HEK293T (cell line): ENCODE measurements at regions of chr10 and their contacts with region 1.

Region 1: DNA sequence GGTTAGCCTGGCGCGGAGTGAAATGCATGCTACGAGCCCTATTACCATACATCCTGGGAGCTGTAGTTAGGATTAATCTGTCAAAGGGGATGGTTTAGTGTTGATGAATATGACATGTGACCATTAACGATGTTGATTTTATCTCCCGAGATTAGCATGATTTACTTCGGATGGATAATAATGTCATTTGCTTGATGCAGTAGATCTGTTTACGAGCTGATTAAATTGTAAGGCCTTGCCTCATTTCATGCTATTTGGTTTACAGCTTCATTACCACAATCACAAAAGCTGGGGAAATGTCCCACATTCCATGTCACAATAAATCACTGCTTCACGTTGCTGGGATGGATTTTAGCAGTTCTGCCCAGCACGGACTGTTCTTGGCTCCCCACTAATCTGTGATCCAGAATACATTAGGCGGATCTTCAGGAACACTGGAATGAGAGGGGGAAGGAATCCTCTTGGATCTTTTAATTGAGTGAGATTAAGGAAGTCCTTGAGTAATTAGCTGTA is 22.3 kb downstream of the ZNF503 start:
- DNase-seq: peak; percentile 68

Region 2: DNA sequence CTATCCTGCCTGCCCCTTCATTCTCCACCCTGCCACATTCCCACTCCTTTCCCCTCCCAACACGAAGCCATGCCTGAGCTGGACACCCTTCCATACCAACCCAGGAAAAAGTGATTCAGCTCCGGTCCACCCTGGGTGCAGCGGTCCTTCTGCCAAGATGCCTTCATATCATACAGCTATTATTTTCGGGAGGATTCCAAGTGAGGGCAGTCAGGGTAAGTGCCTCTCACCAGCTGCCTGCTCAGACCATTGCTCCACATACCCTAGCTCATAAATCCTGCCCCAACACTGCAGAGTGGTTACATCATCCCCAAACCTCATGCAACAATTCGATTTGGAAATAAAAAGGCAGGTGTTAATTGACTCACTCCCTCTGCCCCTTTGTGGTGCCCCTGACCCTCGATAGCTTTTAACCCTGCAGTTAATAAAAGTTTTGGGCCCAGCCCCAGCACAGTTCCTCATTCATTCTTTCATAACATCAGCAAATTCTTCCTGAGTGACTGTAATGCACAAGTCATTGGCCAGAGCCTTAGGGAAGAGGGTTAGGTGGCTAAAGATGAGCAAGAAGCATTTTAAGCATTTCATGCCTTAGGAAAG is 20.3 kb before region 1 on chr10:
- CTCF ChIA-PET with region 1: interaction called, 5 read pairs
- POLR2A ChIA-PET with region 1: interaction called, 33 read pairs
- DNase-seq: peak; percentile 50

Region 3: DNA sequence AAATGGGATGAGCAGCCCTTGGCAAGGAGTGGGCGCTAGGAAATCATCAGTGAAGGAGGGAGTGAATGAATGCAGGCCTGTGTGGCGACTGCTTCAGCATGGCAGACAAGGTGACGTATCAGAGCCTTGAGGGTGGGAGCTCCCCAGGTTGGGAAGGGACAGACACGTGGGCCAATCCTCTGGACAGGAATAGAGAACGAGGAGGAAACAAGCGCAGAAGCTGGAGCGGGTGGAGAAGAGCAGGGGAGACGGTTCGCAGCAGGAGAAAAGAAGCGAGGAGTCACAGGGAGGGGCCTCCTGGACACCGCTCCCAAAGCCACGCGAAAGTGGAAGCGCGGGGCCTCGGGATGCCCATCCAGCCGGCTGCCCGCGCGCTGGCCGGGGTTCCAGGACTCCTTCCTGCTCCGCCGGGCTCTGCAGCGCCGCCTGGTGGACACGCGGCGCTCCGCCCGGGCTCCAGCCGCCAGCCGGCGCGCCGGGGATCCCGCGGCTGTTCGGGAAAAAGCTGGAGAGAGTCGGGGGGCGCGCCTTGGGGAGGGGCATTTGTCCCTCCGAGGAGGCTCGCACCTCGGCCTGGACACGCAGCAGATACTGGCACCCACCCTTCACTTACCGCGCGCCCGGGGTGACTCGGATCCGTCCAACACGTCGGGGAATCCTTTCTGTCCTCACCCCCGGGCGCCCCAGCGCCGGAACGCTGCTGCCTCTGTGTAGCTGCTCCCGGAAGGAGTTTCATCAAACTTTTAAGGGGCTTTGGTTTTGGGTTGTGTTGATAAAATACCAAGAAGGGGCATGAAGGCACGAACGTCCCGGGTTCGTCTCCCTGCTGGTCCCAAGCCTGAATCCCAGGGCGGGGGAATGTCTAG is 16.0 kb after region 1 on chr10:
- CTCF ChIA-PET with region 1: interaction called, 19 read pairs
- POLR2A ChIA-PET with region 1: interaction called, 127 read pairs
- DNase-seq: no peak

Region 4: GRCh38 chr10:75428434-75429158 is 49.3 kb after region 1 on chr10:
- CTCF ChIA-PET with region 1: no interaction called
- POLR2A ChIA-PET with region 1: no interaction called
- DNase-seq: peak; percentile 53

Region 5: DNA sequence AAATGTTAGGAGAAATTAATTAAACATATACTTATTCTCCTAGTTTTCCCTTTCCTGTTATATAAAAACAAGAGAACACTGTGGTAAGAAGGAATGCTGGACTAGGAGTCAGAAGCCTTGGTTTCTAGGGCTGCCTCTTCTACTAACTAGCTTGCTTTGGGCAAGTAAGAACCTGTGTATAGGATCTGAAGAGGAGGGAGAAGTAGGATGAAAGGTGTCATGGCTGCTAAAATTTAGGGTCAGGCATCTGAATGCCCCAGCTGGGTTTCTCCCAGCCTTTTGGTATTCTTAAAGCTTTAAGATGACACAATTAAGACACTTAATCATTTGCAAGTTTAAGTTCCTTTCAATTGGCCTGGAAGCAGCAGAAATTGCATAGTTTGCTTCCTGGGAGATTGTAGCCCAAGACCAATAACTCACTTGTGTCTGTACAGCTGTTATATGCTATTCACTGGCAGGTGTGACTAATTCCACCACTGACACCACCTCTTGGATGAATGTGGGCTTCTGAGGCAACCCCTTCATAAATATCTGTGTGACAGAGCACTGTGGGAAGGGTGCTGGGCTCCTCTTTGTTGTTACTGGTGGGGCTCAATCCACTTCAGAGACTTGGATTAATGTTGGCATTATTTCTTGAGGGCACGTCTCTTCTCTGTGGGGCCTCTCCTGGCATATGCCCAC is 189.3 kb after region 1 on chr10:
- CTCF ChIA-PET with region 1: no interaction called
- POLR2A ChIA-PET with region 1: no interaction called
- DNase-seq: no peak